ENCODE measurements at regions of chr2 and their contacts with region 1.

Region 1: GRCh38 chr2:55232084-55232862 is at the starts of genes CLHC1 and RPS27A:
- DNase-seq: peak; percentile 95
- ATAC-seq: peak; percentile 90
- H3K4me3 Mint-ChIP-seq: peak within 1 kb of the TSS; percentile 98
- H3K27ac Mint-ChIP-seq: peak within 1 kb of the TSS; percentile 98
- H3K4me1 Mint-ChIP-seq: peaks cover 60% of the 10 kb centered on the region
- H3K27me3 Mint-ChIP-seq: no peaks in the 10 kb centered on the region
- total RNA-seq, gene CLHC1: 4.0 to 6.1 TPM
- total RNA-seq, gene RPS27A: 674 to 1,461 TPM

Region 2: GRCh38 chr2:53767405-53768241 is 1464.7 kb before region 1 on chr2 and contains the start of gene CHAC2:
- CTCF ChIA-PET with region 1: no interaction called
- POLR2A ChIA-PET with region 1: no interaction called
- intact Hi-C with region 1: loop called in 1 of 2 experiments (anchors 1 kb)
- DNase-seq: peak; percentile 94
- ATAC-seq: peak; percentile 96
- H3K4me3 Mint-ChIP-seq: peak within 1 kb of the TSS; percentile 91
- H3K27ac Mint-ChIP-seq: peak within 1 kb of the TSS; percentile 96
- H3K4me1 Mint-ChIP-seq: peaks cover 26% of the 10 kb centered on the region
- H3K27me3 Mint-ChIP-seq: no peaks in the 10 kb centered on the region
- total RNA-seq, gene CHAC2: 15.8 to 17.4 TPM

Region 3: DNA sequence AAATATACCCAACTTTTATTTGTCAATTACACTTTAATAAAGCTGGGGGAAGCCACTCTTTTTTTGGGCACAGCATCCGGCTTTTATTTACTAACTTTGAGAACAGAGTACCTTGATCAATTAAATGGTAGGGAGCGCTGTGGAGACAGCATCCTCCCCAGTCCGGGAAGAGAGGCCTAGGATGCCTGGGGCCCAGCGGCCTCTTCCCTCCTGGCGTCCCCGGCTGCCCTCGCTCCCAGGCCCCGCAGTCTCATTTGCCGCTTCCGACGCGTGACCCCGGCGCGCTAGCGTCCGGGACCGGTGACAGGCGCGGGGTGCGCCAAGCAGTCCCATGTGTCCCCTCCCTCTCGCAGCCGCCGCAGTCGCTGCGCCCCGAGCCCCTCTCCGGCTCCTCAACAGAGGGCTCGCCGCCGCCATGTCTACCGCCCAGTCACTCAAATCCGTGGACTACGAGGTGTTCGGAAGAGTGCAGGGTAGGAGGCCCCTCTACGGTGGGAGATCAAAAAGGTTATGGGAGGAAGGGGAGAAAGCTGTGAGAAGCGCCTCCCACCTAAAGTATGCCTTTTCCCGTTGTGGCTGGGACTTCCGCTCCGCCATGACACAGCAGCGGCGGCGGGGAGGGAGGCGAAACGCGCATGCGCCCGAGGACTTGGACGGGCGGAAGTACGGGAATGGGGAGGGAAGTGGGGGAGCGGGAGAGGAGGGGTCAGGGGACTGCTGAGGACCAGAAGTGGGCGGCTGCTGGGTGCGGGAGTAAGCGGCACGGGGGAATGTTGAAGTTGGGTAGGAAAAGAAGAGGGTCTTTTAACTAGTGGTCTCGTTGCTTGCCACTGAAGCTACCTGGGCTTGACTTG is 1116.8 kb before region 1 on chr2 and contains the start of gene ACYP2:
- CTCF ChIA-PET with region 1: interaction called, 4 read pairs
- POLR2A ChIA-PET with region 1: no interaction called
- intact Hi-C with region 1: loop called in 1 of 2 experiments (anchors 1 kb)
- DNase-seq: peak; percentile 95
- ATAC-seq: peak; percentile 90
- H3K4me3 Mint-ChIP-seq: peak within 1 kb of the TSS; percentile 85
- H3K27ac Mint-ChIP-seq: peak within 1 kb of the TSS; percentile 96
- H3K4me1 Mint-ChIP-seq: peaks cover 12% of the 10 kb centered on the region
- H3K27me3 Mint-ChIP-seq: peaks cover 2% of the 10 kb centered on the region
- total RNA-seq, gene ACYP2: 6.0 to 6.9 TPM

Region 4: GRCh38 chr2:54899576-54900200 is 332.6 kb before region 1 on chr2:
- CTCF ChIA-PET with region 1: interaction called, 3 read pairs
- POLR2A ChIA-PET with region 1: no interaction called
- intact Hi-C with region 1: loop called in 1 of 2 experiments (anchors 5 kb)
- DNase-seq: no peak
- ATAC-seq: no peak
- H3K4me3 Mint-ChIP-seq: no peak overlapping the region
- H3K27ac Mint-ChIP-seq: no peak overlapping the region
- H3K4me1 Mint-ChIP-seq: peaks cover 28% of the 10 kb centered on the region
- H3K27me3 Mint-ChIP-seq: no peaks in the 10 kb centered on the region

Region 5: DNA sequence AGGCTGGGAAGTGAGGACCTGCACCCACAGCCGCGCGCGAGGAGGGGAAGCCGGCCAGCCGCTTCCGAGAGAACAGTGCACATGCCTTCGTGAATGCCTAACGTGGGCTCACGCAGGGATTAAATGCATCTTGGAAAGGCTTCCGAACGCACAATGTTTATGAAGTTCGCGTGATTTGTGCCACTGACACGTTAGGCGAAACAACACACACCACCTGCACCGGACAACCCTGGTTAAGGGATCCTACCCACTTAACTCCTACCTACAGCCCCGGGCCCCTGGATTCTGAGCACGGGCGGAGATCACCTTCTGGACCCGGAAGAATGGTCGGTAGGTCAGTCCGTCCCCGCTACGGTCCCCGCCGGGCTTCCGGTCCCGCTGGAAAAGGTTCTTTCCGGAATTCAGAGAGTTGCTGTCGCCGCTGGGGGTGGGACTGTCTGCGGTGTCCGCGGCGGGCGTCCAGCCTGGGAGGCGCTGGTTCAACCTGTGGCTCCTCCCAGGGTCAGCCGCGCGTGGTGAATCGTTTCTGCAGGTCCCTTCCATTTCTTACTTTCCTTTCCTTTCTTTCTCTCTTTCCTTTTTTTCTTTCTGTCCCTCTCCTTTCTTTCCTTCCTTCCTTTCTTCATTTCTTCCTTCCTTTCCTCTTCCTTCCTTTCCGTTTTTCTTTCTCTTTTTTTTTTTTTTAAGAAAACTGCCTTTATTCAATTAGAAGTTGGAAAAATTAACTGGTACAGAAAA is 36.8 kb after region 1 on chr2 and contains the start of gene MTIF2:
- CTCF ChIA-PET with region 1: interaction called, 4 read pairs
- POLR2A ChIA-PET with region 1: no interaction called
- intact Hi-C with region 1: loop called (anchors 1 to 2 kb)
- DNase-seq: peak; percentile 94
- ATAC-seq: peak; percentile 95
- H3K4me3 Mint-ChIP-seq: peak within 1 kb of the TSS; percentile 96
- H3K27ac Mint-ChIP-seq: peak within 1 kb of the TSS; percentile 95
- H3K4me1 Mint-ChIP-seq: peaks cover 10% of the 10 kb centered on the region
- H3K27me3 Mint-ChIP-seq: no peaks in the 10 kb centered on the region
- total RNA-seq, gene MTIF2: 37.3 to 43.2 TPM

Region 6: DNA sequence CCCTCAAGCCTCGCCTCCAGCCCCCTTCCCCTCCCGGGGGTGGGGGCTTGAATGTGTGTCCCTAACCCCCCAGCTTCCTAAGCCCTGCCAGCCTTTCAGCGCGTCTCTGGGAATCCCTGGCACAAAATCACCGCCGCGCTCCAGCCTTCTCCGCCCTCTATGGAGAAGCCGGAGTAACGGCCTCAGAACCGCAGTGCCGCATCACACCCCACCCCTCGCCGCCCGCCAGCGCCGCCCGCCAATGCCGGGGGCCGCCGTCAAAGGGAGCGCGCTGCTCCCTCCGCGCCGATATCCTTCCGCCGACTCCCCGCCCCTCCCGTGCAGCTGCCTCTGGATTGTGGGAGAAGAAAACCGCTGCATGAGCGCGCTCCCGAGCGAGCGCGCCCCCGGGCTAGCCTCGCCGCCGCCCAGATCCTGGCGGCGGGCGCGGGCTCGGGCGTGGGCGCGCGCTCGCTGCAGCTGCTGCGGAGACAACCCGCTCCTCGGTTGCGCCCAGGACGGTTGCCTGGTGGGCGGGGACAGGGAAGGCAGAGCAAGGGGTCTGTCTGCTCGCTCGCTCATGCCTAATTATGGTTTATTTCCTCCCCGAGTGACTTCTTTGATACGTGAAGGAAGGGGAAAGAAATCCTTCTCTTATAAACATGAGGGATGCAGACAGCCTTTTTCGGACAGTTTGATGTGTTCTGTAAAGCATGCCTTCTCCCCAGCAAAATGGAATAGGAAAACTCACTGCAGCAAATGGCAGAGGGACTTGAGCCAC is 187.6 kb after region 1 on chr2 and contains the start of gene CCDC88A:
- CTCF ChIA-PET with region 1: no interaction called
- POLR2A ChIA-PET with region 1: no interaction called
- intact Hi-C with region 1: loop called (anchors 1 to 5 kb)
- DNase-seq: peak; percentile 92
- ATAC-seq: peak; percentile 88
- H3K4me3 Mint-ChIP-seq: peak within 1 kb of the TSS; percentile 77
- H3K27ac Mint-ChIP-seq: peak within 1 kb of the TSS; percentile 69
- H3K4me1 Mint-ChIP-seq: peaks cover 34% of the 10 kb centered on the region
- H3K27me3 Mint-ChIP-seq: peaks cover 13% of the 10 kb centered on the region
- total RNA-seq, gene CCDC88A: 10.1 to 11.3 TPM

Region 7: GRCh38 chr2:55693181-55694134 is 461.2 kb after region 1 on chr2 and contains the start of gene PNPT1:
- CTCF ChIA-PET with region 1: no interaction called
- POLR2A ChIA-PET with region 1: no interaction called
- intact Hi-C with region 1: loop called in 1 of 2 experiments (anchors 2 kb)
- DNase-seq: peak; percentile 97
- ATAC-seq: peak; percentile 100
- H3K4me3 Mint-ChIP-seq: peak within 1 kb of the TSS; percentile 98
- H3K27ac Mint-ChIP-seq: peak within 1 kb of the TSS; percentile 96
- H3K4me1 Mint-ChIP-seq: peaks cover 32% of the 10 kb centered on the region
- H3K27me3 Mint-ChIP-seq: no peaks in the 10 kb centered on the region
- total RNA-seq, gene PNPT1: 41.1 to 54.0 TPM